ENCODE measurements at regions of chr16 and their contacts with region 1.

Region 1: GRCh38 chr16:8567750-8568617 is 22.3 kb downstream of the TMEM114 start:
- DNase-seq: peak; percentile 53
- H3K4me3 ChIP-seq: no peak overlapping the region
- H3K27ac ChIP-seq: no peak overlapping the region
- H3K4me1 ChIP-seq: no peaks in the 10 kb centered on the region
- H3K27me3 ChIP-seq: no peaks in the 10 kb centered on the region
- CTCF ChIP-seq: peak; percentile 89 to 97 (median 94)
- POLR2A ChIP-seq: no peak

Region 2: DNA sequence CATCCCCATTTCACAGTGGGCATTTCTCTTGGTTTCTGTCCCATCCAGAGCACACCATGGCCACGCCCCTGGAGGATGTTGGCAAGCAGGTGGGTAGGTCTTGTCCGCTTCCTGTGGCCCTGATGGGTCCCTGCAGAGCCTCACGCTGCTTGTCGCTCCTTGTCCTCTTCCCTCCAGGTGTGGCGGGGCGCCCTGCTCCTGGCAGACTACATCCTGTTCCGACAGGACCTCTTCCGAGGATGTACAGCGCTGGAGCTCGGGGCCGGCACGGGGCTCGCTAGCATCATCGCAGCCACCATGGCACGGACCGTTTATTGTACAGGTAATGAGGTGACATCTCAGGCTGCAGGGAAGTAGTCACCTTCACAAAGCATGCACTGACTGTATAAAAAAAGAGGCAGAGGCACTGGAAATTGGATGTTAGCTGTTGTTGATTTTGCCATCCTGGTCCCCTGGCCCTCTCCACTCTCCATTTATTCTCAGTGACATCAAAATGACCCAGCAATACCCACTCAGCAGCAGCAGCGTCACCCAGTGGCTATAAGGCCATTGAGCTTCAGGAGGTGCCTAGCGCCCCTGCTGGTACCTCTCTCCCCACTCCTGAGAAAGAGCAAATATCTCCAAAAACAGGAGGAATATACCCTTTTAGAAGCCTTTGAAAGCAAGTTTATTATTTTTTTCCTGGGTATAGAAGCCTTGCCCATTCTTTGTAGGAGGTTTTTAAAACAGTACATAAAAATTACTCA is 67.2 kb after region 1 on chr16:
- intact Hi-C with region 1: no loop called
- DNase-seq: no peak
- H3K4me3 ChIP-seq: no peak overlapping the region
- H3K27ac ChIP-seq: no peak overlapping the region
- H3K4me1 ChIP-seq: no peaks in the 10 kb centered on the region
- H3K27me3 ChIP-seq: no peaks in the 10 kb centered on the region
- CTCF ChIP-seq: no peak
- POLR2A ChIP-seq: no peak

Region 3: DNA sequence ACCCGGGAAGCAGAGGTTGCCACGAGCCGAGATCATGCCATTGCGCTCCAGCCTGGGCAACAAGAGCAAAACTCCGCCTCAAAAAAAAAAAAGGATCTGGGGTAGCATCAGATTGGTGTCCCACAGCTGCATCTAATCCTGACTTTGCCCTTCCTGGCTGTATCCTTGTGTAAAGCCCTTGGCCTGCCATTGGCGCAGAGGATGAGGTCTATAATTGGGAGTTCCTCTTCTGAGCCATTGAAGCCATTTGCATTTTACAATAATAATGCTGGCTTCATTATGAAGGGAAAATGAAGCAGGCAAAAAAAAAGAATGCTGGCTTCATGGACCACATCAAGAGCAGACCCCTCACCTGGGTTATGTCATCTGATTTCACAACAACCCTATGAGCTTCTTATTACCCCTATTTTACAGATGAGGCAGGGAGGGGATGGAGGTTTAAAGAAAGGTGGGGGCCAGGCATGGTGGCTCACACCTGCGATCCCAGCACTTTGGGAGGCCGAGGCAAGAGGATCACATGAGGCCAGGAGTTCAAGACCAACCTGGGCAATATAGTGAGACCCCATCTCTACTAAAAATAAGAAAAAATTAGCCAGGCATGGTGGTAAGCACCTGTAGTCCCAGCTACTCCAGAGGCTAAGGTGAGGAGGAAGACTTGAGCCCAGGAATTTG is 313.0 kb after region 1 on chr16:
- intact Hi-C with region 1: loop called (anchors 2 kb)
- DNase-seq: no peak
- H3K4me3 ChIP-seq: no peak overlapping the region
- H3K27ac ChIP-seq: no peak overlapping the region
- H3K4me1 ChIP-seq: no peaks in the 10 kb centered on the region
- H3K27me3 ChIP-seq: no peaks in the 10 kb centered on the region
- CTCF ChIP-seq: no peak
- POLR2A ChIP-seq: no peak

Region 4: GRCh38 chr16:9008601-9009260 is 440.7 kb after region 1 on chr16:
- intact Hi-C with region 1: loop called (anchors 5 kb)
- DNase-seq: peak; percentile 51
- H3K4me3 ChIP-seq: peak overlapping the region in 1 of 2 donors; percentile 10
- H3K27ac ChIP-seq: no peak overlapping the region
- H3K4me1 ChIP-seq: no peaks in the 10 kb centered on the region
- H3K27me3 ChIP-seq: no peaks in the 10 kb centered on the region
- CTCF ChIP-seq: peak; percentile 49 to 72 (median 67)
- POLR2A ChIP-seq: no peak

Measured in prostate gland (tissue), 2 donors.